ENCODE measurements at regions of chr21 and their contacts with region 1.

Region 1: DNA sequence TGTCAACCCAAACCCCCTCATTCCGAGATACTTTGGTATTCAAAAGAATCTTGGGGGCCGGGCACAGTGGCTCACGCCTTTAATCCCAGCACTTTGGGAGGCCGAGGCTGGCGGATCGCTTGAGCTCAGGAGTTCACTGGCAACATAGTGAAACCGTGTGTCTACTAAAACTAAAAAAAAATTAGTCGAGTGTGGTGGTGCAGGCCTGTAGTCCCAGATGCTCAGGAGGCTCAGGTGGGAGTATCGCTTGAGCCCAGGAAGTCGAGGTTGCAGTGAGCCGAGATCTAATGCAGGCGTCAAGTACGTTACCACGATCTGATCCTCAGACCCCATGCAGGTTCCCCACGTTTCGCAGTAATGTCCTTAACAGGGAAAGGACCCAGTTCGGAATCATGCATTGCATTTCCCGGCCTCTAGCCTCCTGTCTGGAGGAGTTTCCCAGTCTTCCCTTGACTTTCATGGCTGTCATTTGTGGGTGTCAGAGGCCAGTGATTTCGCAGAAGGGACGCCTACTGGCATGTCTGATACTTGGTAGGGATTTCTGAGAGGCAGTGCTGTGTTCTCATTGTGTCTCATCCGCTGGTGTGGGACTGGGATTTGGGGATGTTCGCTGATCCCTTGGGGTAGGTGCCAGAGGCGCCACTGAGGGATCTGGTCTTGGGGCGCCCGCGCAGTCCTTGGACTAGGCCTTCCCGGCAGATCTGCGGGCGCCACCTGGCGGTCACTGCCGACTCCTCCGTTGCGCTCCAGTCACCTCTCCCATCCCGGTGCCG is 39.3 kb upstream of the HMGN1 start:
- DNase-seq: peak; percentile 89
- H3K4me3 ChIP-seq: peak overlapping the region; percentile 28 to 39
- H3K27ac ChIP-seq: peak overlapping the region; percentile 56 to 68
- H3K4me1 ChIP-seq: no peaks in the 10 kb centered on the region
- H3K27me3 ChIP-seq: no peaks in the 10 kb centered on the region
- CTCF ChIP-seq: peak; percentile 86 to 95 (median 90)
- POLR2A ChIP-seq: no peak

Region 2: GRCh38 chr21:39183237-39184007 is 204.8 kb before region 1 on chr21 and contains the start of gene PSMG1:
- intact Hi-C with region 1: loop called (anchors 2 kb)
- DNase-seq: peak; percentile 89
- H3K4me3 ChIP-seq: peak within 1 kb of the TSS; percentile 61 to 76
- H3K27ac ChIP-seq: peak within 1 kb of the TSS; percentile 86 to 91
- H3K4me1 ChIP-seq: no peaks in the 10 kb centered on the region
- H3K27me3 ChIP-seq: no peaks in the 10 kb centered on the region
- CTCF ChIP-seq: peak in 1 of 4 experiments; percentile 23
- POLR2A ChIP-seq: peak; percentile 81
- total RNA-seq, gene PSMG1: 16.7 to 37.1 TPM

Region 3: GRCh38 chr21:39349211-39350093 is 38.8 kb before region 1 on chr21:
- intact Hi-C with region 1: loop called (anchors 2 kb)
- DNase-seq: peak; percentile 98
- H3K4me3 ChIP-seq: peak overlapping the region; percentile 67 to 73
- H3K27ac ChIP-seq: peak overlapping the region; percentile 95 to 97
- H3K4me1 ChIP-seq: peaks cover 6% of the 10 kb centered on the region
- H3K27me3 ChIP-seq: no peaks in the 10 kb centered on the region
- CTCF ChIP-seq: peak in 1 of 4 experiments; percentile 12
- POLR2A ChIP-seq: peak; percentile 64

Measured in prostate gland (tissue), 2 donors.